ENCODE measurements at regions of chr9 and their contacts with region 1.

Region 1: GRCh38 chr9:15357050-15357653 is 50.1 kb upstream of the TTC39B start:
- DNase-seq: peak; percentile 58
- ATAC-seq: peak; percentile 94
- H3K4me3 Mint-ChIP-seq: no peak overlapping the region
- H3K27ac Mint-ChIP-seq: peak overlapping the region; percentile 2; the same call in 1 of the 2 replicates
- H3K4me1 Mint-ChIP-seq: peaks cover 37% of the 10 kb centered on the region
- H3K27me3 Mint-ChIP-seq: no peaks in the 10 kb centered on the region; the same call in 1 of the 2 replicates
- CTCF ChIP-seq: no peak

Region 2: GRCh38 chr9:15262581-15262980 is 94.6 kb before region 1 on chr9:
- CTCF ChIA-PET with region 1: no interaction called
- POLR2A ChIA-PET with region 1: no interaction called
- DNase-seq: no peak
- ATAC-seq: no peak
- H3K4me3 Mint-ChIP-seq: no peak overlapping the region
- H3K27ac Mint-ChIP-seq: 0 out of 2 replicates have a peak overlapping the region, but pooled peaks have one; percentile 50
- H3K4me1 Mint-ChIP-seq: no peaks in the 10 kb centered on the region
- H3K27me3 Mint-ChIP-seq: no peaks in the 10 kb centered on the region
- CTCF ChIP-seq: no peak

Region 3: DNA sequence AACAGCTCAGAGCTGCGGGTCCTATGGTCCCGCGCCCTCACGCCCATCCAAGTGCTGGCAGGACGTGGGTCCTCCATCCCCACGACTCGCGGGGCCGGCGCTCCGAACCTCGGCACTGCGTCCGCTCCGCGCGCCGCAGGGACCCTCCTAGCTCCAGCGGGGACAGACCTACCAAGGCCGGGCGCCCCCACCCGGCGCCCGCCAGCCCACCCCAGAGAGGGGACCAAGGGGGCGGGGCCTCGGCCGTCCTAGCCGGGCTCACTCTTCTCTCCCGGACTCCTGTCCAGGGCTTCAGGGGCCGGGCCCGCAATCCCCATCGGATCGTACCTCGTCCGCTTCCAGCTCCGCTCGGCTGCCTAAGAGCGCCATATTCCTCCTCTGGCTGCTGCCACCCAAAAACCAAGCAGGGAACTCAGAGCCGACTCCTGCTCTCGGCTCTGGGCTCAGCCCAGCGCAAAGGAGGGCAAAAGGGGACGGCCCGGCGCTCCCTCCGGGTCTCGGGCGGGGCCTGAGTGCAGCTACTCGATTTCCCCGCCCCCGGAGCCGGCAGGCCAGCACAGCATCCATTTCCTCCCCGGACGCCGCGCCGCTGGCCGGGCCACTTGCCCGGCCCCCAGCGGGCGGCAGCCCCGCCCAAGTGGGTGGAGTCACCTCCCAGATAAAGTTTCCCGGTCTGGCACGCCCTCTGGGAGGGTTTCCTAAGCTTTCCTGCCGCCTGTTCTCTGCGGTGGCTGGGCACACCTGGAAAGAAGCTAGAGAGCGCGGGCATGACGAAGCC is 50.2 kb before region 1 on chr9 and contains the start of gene TTC39B:
- CTCF ChIA-PET with region 1: interaction called, 14 read pairs
- POLR2A ChIA-PET with region 1: interaction called, 3 read pairs
- DNase-seq: peak; percentile 98
- ATAC-seq: peak; percentile 91
- H3K4me3 Mint-ChIP-seq: peak within 1 kb of the TSS; percentile 94
- H3K27ac Mint-ChIP-seq: peak within 1 kb of the TSS; percentile 95
- H3K4me1 Mint-ChIP-seq: peaks cover 23% of the 10 kb centered on the region
- H3K27me3 Mint-ChIP-seq: peaks cover 16% of the 10 kb centered on the region
- CTCF ChIP-seq: no peak
- total RNA-seq, gene TTC39B: 12.3 to 13.9 TPM (median 12.5 TPM) in 3 replicates